ENCODE measurements at regions of chr2 and their contacts with region 1.

Region 1: DNA sequence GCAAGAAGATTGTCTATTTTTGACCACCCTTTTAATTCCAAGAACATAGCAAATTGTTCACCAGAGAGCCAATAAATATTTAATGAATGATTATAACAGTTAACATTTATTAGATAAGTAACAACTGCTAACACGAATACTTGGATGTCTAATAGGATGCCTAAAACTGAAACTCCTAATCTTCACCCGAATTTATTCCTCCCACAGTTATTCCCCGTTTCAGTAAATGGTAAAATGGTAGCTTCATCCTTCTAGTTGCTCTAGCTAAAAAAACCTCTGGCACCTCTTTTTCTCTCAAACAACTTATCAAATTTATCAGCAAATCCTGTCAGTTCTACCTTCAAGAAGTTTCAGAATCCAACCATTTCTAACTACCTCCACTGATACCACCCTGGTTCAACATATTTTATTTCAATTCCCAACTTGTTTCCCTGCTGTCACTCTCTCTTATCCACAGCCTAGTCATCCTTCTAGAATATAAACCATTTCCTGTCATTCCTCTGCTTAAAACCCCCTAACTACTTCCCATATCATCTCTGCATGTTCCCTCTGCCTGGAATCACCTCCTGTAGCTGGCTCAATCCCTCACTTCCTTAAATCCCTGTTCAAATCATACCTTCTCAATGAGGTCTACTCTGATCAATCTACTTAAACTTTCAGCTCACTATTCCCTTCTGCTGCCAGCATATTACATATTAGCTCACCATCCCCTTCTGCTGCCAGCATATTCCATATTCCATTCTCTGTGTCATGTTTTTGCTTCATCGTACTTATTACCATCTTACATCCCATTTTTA is 93.8 kb downstream of the ROCK2 start:
- DNase-seq: no peak
- H3K4me3 ChIP-seq: no peak overlapping the region
- CTCF ChIP-seq: no peak

Region 2: DNA sequence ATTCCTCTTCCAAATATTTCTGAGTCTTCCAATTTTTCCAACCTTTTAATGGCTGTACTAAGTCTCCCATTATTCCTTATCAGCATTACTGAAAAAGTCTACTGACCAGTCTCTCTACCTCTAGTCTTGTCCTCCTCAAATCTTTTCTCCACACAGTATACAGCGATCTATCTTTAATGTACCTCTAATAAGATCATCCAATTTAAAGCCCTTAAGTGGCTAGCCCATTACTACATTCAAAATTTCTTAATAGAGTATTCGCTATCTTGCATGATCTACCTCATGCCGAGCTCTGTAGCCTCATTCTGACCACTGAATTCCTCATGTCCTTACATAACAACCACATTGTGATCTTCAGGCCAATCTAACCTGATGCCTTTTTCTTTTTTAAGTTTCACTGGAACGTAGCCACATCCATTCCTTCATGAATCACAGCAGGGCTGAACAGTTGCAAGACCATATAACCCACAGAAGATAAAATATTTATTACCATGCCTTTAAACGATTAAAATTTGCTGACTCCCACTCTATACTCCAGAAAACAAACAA is 37.4 kb before region 1 on chr2:
- CTCF ChIA-PET with region 1: no interaction called
- POLR2A ChIA-PET with region 1: no interaction called
- DNase-seq: no peak
- H3K4me3 ChIP-seq: no peak overlapping the region
- CTCF ChIP-seq: no peak

Region 3: DNA sequence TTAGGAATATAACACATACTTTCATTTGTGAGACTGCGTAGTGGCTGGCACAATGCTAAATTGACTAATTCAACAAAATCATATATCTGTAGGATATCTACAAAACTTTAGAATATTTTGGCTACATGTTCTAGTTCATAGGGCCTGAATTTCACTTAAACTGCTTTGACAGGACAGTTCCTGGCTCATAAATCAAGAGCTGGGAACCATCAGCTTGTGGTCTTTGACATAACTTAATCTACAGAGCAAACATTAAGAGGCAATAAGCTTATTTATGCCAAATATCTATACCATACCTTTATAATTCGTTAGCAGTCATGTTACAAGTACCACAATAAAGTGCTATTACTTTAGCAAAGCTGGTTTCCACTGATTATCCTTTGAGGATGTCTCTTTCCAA is 10.4 kb after region 1 on chr2:
- CTCF ChIA-PET with region 1: interaction called, 12 read pairs
- POLR2A ChIA-PET with region 1: no interaction called
- DNase-seq: no peak
- H3K4me3 ChIP-seq: no peak overlapping the region
- CTCF ChIP-seq: no peak

Measured in AG04449 (cell line).